ENCODE measurements at regions of chr6 and their contacts with region 1.

Region 1: GRCh38 chr6:72622094-72622940 is 453 bp downstream of the KCNQ5 start:
- DNase-seq: peak; percentile 60 to 86
- ATAC-seq: peak; percentile 55
- H3K4me3 ChIP-seq: peak overlapping the region; percentile 59 to 60
- H3K27ac ChIP-seq: no peak overlapping the region
- H3K4me1 ChIP-seq: no peaks in the 10 kb centered on the region
- H3K27me3 ChIP-seq: no peaks in the 10 kb centered on the region

Region 2: GRCh38 chr6:72411872-72412708 is 210.2 kb before region 1 on chr6:
- intact Hi-C with region 1: loop called in 1 of 2 experiments (anchors 10 kb)
- DNase-seq: peak; percentile 54 to 85
- ATAC-seq: peak; percentile 92
- H3K4me3 ChIP-seq: no peak overlapping the region
- H3K27ac ChIP-seq: no peak overlapping the region
- H3K4me1 ChIP-seq: no peaks in the 10 kb centered on the region
- H3K27me3 ChIP-seq: no peaks in the 10 kb centered on the region

Region 3: GRCh38 chr6:72755752-72756151 is 133.4 kb after region 1 on chr6:
- intact Hi-C with region 1: loop called in 1 of 2 experiments (anchors 5 kb)
- DNase-seq: no peak
- ATAC-seq: no peak
- H3K4me3 ChIP-seq: no peak overlapping the region
- H3K27ac ChIP-seq: no peak overlapping the region
- H3K4me1 ChIP-seq: peaks cover 0 to 7% of the 10 kb centered on the region in 2 donors
- H3K27me3 ChIP-seq: no peaks in the 10 kb centered on the region

Region 4: DNA sequence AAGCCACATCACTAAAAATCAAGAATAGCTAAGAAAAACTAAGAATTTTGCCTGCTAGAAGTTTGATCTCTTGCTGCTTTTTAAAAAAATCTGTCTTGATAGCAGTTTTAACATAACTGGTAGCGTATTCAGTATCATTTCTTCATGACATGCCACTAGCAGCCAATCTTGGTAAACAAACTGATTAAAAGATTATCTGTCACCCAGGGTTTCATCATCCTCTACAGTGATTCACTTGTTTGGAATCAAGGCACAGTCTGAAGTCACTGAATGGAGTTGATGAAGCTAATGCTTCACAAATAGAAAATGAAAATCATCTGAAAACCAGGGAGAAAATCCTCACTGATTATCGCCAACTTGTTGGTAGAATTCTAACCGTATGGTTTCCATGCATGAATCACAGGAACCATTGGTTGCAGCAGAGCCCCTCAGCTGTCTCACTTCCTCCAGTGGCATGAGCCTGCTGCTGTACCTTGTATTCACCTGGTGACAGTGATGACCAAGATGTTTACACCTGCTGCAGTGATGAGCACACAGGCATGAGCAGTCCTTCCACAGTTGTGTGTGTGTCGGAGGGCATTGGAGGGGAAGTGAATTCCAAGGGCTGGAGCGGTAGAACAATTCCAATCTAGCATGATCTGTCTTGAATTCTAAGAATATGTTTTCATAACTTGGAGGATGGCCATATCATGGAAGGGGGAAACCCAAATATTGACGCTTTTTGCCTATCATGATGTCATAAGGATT is 328.0 kb after region 1 on chr6:
- intact Hi-C with region 1: loop called (anchors 10 kb)
- DNase-seq: no peak
- ATAC-seq: peak; percentile 77
- H3K4me3 ChIP-seq: no peak overlapping the region
- H3K27ac ChIP-seq: peak overlapping the region in 1 of 2 donors; percentile 94
- H3K4me1 ChIP-seq: peaks cover 3 to 20% of the 10 kb centered on the region in 2 donors
- H3K27me3 ChIP-seq: no peaks in the 10 kb centered on the region

Region 5: GRCh38 chr6:73129653-73130443 is 507.5 kb after region 1 on chr6:
- intact Hi-C with region 1: loop called in 1 of 2 experiments (anchors 2 kb)
- DNase-seq: peak; percentile 88 to 95
- ATAC-seq: peak; percentile 92
- H3K4me3 ChIP-seq: no peak overlapping the region
- H3K27ac ChIP-seq: no peak overlapping the region
- H3K4me1 ChIP-seq: no peaks in the 10 kb centered on the region
- H3K27me3 ChIP-seq: no peaks in the 10 kb centered on the region

Measured in aorta (tissue), 5 donors.